ENCODE measurements at regions of chr1 and their contacts with region 1.

Region 1: GRCh38 chr1:243850452-243851256 is 611 bp upstream of the AKT3 start:
- DNase-seq: peak; percentile 70 to 92
- H3K4me3 ChIP-seq: peak overlapping the region; percentile 69
- H3K27ac ChIP-seq: peak overlapping the region; percentile 85
- H3K4me1 ChIP-seq: peaks cover 49% of the 10 kb centered on the region
- H3K27me3 ChIP-seq: no peaks in the 10 kb centered on the region
- CTCF ChIP-seq: no peak

Region 2: DNA sequence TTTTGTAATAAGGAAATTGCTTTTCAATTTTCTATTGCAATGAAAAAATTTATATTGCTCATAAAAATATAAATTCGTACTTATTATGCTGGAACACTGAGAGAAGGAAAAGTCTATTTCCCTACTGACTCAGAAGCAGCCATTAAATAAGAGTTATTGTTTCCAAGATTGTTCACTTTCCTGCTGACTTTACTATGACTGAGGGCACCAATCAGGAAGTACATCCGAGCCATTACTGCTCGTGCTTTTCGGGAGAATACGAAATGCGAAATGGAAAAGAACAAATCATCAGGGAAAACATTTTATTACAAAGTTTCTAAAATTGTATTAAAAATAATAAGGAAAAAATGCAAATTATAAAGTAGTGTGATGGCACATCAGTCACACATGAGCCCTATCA is 205.4 kb before region 1 on chr1:
- CTCF ChIA-PET with region 1: no interaction called
- POLR2A ChIA-PET with region 1: interaction called, 15 read pairs
- intact Hi-C with region 1: no loop called
- DNase-seq: no peak
- H3K4me3 ChIP-seq: no peak overlapping the region
- H3K27ac ChIP-seq: no peak overlapping the region
- H3K4me1 ChIP-seq: no peaks in the 10 kb centered on the region
- H3K27me3 ChIP-seq: no peaks in the 10 kb centered on the region
- CTCF ChIP-seq: no peak

Region 3: GRCh38 chr1:243748706-243749283 is 101.9 kb before region 1 on chr1:
- CTCF ChIA-PET with region 1: no interaction called
- POLR2A ChIA-PET with region 1: no interaction called
- intact Hi-C with region 1: loop called (anchors 10 kb)
- DNase-seq: peak; percentile 7 to 67
- H3K4me3 ChIP-seq: no peak overlapping the region
- H3K27ac ChIP-seq: peak overlapping the region; percentile 10; the same call in 1 of the 2 replicates
- H3K4me1 ChIP-seq: no peaks in the 10 kb centered on the region
- H3K27me3 ChIP-seq: no peaks in the 10 kb centered on the region
- CTCF ChIP-seq: peak; percentile 83

Region 4: DNA sequence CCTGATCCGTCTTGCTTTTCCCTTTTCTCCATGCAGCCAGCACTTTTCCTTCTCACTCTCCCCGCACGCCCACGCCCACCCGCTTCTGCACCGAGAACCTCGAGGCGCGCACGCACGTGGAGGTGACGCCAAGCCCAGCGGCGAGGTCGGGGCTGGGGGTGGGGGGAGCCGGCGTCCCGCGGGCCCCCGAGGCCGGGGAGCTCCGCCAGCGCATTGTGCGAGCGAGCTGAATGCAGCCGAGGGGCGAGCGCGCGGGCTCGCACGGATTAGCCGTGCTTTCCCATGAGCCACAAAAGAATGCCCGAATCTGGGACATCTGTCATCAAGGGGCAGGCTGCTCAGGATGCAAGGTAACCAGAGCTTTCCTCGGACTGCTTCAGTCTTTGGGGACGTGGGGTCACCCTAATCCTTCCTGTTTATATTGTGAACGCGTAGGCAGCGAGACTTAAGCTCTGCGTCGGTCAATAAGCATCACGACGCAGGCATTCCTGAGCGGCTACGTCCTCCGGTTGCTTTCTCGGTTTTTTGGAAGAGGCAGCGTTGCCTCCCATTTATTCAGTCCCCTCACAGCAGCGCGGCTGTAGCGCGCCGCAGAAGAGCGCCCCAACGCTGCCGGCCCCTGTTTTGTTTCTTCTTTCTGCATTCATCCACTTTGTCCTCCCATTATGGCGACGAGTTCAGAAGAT is 66.7 kb after region 1 on chr1:
- CTCF ChIA-PET with region 1: no interaction called
- POLR2A ChIA-PET with region 1: interaction called, 4 read pairs
- intact Hi-C with region 1: loop called (anchors 5 kb)
- DNase-seq: peak; percentile 27 to 67
- H3K4me3 ChIP-seq: peak overlapping the region; percentile 35; the same call in 1 of the 2 replicates
- H3K27ac ChIP-seq: peak overlapping the region; percentile 80
- H3K4me1 ChIP-seq: peaks cover 49% of the 10 kb centered on the region
- H3K27me3 ChIP-seq: no peaks in the 10 kb centered on the region
- CTCF ChIP-seq: no peak

Region 5: DNA sequence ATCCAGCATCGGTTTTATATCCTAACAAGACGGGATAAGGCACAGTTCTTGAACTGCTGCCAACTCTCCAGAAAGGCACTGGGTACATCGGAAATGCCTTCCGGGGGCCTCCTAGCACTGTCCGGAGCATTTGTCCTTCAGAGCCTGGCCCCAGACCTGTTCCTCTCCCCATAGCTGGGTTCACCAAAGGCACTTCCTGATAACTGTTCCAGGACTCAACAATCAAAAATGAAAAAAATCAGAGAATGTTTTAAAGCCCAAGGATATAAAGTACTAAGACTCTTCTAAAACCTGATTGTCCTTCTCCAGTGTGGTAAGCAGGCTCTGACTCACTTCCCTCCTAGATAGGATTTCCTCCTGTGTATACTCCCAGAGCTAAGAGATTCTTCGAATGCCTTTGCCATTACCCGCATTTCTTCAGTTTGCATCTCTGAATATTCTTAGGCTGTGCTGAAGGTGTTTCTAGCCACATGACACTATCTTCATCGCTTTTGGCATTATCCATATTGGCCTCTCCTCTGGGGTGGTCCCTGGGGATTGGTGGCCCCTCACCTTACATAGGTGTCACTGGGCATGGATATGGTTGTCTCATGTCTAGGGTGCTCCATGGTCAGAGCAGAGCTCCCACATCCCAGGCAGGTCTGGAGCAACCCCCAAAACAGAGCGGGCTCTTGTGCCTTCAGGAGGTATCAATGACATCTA is 313.4 kb after region 1 on chr1:
- CTCF ChIA-PET with region 1: no interaction called
- POLR2A ChIA-PET with region 1: no interaction called
- intact Hi-C with region 1: loop called (anchors 1 kb)
- DNase-seq: peak; percentile 76 to 100
- H3K4me3 ChIP-seq: peak overlapping the region; percentile 15; the same call in 1 of the 2 replicates
- H3K27ac ChIP-seq: peak overlapping the region; percentile 83
- H3K4me1 ChIP-seq: peaks cover 54% of the 10 kb centered on the region
- H3K27me3 ChIP-seq: no peaks in the 10 kb centered on the region
- CTCF ChIP-seq: no peak